IMR-90 (cell line): ENCODE measurements at regions of chr6 and their contacts with region 1.

Region 1: DNA sequence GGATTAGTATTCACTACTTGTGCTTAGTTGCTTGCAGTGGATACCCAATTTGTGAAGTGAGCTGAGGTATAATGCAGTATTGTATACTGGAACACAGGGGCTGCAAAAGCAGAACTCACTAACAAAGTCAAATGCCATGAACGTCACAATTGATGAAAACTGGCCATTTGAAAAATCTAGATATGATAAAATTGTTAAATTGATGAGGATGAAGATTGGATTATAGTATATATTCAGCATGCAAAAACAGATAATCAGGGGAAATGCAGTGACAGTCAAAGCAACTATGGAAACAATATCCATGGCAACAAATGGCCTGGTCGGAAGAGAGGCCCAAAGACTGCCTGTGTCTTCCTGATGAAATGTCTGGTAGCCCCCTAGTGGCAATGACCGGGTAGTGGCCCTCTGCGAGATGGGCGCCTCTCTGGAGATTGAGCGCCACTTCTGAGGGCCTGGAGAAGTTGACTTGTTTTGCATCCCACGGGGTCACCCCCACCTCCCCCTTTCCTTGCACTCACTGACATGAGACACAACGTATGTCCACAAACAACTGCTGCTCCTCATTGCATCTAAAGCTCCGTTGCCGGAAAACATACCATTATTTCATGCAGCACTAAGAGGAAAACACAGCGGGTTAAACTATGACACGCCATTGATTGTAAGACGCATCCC is 43.6 kb downstream of the C6orf15 start:
- DNase-seq: peak; percentile 83
- ATAC-seq: peak; percentile 74
- H3K4me3 ChIP-seq: no peak overlapping the region
- H3K27ac ChIP-seq: no peak overlapping the region
- H3K4me1 ChIP-seq: peaks cover 3% of the 10 kb centered on the region
- H3K27me3 ChIP-seq: no peaks in the 10 kb centered on the region
- CTCF ChIP-seq: peak; percentile 86
- POLR2A ChIP-seq: no peak
- RAD21 ChIP-seq: peak; percentile 77

Region 2: DNA sequence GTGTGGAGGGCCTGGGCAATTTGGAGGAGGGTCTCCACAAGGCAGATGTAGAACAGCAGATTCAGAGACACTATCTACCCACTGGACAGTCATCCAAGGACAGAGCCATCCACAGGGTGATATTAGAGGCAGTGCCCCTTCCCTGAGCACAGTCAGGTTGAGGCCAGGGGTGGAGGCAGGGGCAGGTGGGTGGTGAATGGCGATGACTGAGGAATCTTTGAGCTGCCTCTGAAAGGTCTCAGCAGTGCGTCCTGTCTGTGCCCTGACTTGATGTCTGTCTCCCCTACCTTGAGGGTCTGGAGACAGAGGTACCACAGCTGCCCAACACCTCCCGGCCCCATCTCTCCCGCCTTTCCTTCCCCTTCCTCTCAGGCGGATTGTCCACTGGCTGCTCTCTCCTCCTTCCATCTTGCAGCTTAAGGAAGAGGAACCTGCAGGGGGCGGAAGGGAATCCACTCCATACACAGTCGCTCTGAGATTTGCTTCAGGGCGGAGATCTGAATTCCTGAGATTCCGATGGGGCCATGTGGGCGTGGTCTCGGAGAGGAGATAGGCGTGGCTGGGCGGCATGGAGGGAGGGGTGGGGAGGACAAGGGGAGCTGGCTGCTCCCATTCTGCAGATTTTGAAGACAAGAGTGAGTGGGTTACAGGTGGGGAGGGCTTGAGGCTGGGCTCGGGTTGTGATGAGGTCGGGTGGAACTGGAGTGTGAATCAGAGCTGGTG is 126.3 kb before region 1 on chr6:
- CTCF ChIA-PET with region 1: interaction called, 11 read pairs
- POLR2A ChIA-PET with region 1: interaction called, 3 read pairs
- dilution Hi-C with region 1: no loop called
- in situ Hi-C with region 1: no loop called
- intact Hi-C with region 1: loop called (anchors 1 kb)
- DNase-seq: peak; percentile 76
- ATAC-seq: peak; percentile 99
- H3K4me3 ChIP-seq: no peak overlapping the region
- H3K27ac ChIP-seq: no peak overlapping the region
- H3K4me1 ChIP-seq: peaks cover 1% of the 10 kb centered on the region; the same call in 1 of the 2 replicates
- H3K27me3 ChIP-seq: peaks cover 55% of the 10 kb centered on the region
- CTCF ChIP-seq: peak; percentile 71
- POLR2A ChIP-seq: no peak
- RAD21 ChIP-seq: peak; percentile 62

Region 3: DNA sequence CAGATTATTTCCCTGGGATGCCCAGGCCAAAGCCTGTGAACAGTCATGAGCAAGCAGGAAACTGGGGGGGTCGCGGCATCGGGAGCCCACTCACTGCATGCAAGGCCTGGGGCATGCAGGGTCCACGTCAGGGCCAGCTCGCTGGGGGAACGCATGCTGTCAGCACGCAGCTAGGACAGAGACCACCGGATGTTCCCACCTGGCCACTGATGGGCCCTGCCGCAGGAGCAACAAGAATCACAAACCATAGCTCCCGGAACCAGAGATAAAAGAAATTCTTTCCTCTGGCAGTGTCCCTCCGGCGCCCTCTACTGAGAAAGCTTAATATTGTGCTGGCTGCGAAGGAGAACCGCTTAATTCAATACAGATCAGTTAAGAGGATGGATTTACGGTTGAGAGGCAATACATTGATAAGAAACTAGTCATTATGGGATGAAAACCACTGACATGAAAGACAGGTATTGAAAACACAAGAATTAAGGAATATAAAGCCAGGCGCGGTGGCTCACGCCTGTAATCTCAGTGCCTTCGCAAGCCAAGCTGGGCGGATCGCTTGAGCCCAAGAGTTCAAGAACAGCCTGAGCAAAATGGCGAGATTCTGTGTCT is 11.0 kb after region 1 on chr6:
- CTCF ChIA-PET with region 1: interaction called, 17 read pairs
- POLR2A ChIA-PET with region 1: no interaction called
- dilution Hi-C with region 1: no loop called
- in situ Hi-C with region 1: no loop called
- intact Hi-C with region 1: no loop called
- DNase-seq: peak; percentile 61
- ATAC-seq: peak; percentile 83
- H3K4me3 ChIP-seq: no peak overlapping the region
- H3K27ac ChIP-seq: no peak overlapping the region
- H3K4me1 ChIP-seq: peaks cover 8% of the 10 kb centered on the region
- H3K27me3 ChIP-seq: no peaks in the 10 kb centered on the region; the same call in 1 of the 2 replicates
- CTCF ChIP-seq: peak; percentile 87
- POLR2A ChIP-seq: no peak
- RAD21 ChIP-seq: peak; percentile 79

Region 4: GRCh38 chr6:31094389-31094881 is 25.6 kb after region 1 on chr6:
- CTCF ChIA-PET with region 1: no interaction called
- POLR2A ChIA-PET with region 1: no interaction called
- dilution Hi-C with region 1: no loop called
- in situ Hi-C with region 1: no loop called
- intact Hi-C with region 1: no loop called
- DNase-seq: no peak
- ATAC-seq: no peak
- H3K4me3 ChIP-seq: no peak overlapping the region
- H3K27ac ChIP-seq: no peak overlapping the region
- H3K4me1 ChIP-seq: no peaks in the 10 kb centered on the region
- H3K27me3 ChIP-seq: peaks cover 4% of the 10 kb centered on the region
- CTCF ChIP-seq: no peak
- POLR2A ChIP-seq: no peak
- RAD21 ChIP-seq: no peak